ENCODE measurements at regions of chrX and their contacts with region 1.

Region 1: DNA sequence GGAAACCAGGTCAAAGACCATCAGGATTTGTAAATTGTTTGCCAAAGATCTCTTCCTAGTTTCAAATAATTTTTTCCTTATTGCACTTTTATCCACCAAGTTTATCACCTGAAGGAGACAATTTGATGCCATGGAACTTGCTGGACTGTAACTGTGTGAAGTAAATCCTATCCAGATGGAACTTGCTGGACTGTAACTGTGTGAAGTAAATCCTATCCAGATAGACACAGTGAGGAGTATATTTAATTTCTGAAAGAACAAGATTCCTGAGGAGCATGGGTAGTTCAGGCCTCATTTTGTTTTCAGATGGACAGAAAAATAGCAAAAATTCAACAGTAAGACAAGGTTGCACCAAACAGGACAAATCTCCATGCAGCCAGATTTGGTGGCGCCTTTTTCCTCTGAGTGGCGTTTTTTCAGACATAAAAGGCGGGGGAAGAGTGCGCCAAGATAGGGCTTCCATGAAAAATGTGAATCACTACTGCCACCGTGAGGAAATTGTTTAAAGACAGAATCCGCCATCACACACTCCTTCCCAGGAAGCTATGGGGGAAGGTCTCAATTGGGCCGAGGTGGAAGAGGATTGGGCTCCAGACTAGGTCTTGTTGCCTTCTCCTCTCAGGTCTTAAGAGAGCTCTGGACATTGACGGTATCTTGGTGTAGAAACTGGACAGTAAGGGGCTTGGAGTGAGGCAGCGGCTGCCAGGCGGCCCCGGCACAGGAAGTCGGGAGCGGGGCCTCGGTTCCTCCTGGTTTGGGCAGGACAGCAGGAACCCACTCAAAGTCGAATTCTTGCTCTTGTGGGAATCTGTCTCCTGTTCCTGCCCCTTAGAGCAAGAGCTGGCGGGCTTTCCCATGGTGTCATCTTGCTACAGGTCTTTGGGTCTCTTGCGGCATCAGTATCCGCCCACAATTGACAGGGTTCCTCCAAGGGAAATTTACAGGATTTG is 234.7 kb downstream of the OR13H1 start:
- DNase-seq: peak in 6 of 10 donors; percentile 64 to 94 (median 71)

Region 2: GRCh38 chrX:131816551-131817136 is 38.1 kb after region 1 on chrX:
- intact Hi-C with region 1: loop called (anchors 1 kb)
- DNase-seq: peak in 5 of 10 donors; percentile 42 to 87 (median 53)

Region 3: GRCh38 chrX:131894987-131895386 is 116.4 kb after region 1 on chrX:
- intact Hi-C with region 1: no loop called
- DNase-seq: no peak